ENCODE measurements at regions of chr11 and their contacts with region 1.

Region 1: DNA sequence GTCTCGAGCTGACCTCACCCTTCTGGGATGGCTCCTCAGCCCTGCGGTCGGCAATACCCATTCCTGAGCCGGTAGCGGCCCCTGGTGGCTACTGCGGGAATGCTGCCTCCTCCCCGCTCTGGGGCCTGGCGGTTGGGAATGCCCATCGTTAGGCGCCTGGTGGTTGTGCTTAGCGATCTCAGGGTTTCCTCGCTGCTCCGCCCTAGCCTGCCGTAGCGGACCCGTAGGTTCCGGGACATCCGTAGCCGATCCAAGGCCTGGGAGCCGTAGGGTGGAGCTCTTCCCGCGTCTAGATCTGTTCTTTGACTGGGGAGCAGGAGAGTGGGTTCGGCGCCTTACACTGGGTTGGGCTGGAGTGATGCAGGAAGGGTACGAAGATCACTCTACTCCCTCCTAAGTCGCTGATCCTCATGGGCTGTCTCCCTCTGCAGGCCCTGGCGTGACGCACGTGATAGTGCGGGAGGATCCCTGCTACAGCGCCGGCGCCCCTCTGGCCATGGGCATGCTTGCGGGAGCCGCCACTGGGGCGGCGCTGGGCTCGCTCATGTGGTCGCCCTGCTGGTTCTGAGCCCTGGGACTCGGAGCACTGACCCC is 14.8 kb downstream of the PLEKHB1 start:
- DNase-seq: peak; percentile 78 to 99
- ATAC-seq: peak; percentile 85 to 98
- H3K4me3 ChIP-seq: peak overlapping the region; percentile 21; the same call in 2 of the 3 replicates
- H3K27ac ChIP-seq: peak overlapping the region; percentile 42 to 62; a peak in 5 of 6 replicates
- H3K4me1 ChIP-seq: no peaks in the 10 kb centered on the region
- CTCF ChIP-seq: peak; percentile 93
- EP300 ChIP-seq: no peak
- POLR2A ChIP-seq: no peak
- RAD21 ChIP-seq: peak; percentile 98 to 99

Region 2: DNA sequence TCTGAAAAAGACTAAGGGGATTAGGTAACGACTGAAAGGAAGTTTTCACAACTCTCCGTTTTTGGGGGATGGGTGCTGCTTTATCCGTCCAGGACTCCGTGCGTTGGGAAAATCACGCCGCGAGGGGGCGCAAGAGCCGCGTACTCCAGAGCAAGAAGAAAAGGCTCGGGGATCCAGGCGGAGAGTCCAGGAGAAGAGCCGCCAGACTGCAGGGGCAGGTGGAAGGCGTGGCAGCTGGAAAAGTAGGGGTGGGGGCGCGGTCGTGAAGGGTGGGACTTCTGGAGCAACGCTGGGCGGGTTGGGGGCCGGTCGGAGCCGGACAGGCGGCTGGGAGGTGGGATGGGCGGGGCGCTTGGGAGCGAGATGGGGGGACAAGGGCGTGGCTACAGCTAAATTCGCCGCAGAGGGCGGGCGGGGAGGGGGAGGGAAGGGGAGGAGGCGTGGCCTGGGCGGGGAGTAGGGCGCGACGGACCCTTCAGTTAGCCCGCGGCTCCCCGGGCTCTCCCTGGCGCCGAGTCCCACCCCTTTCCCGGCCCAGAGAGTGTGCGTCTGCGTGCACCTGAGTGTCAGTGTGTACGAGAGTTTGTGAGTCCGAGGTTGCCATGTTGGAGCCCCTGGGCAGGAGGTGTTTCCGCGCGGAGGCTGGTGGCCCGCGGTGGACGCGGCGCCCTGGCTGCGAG is 353.7 kb before region 1 on chr11:
- CTCF ChIA-PET with region 1: interaction called, 41 read pairs
- POLR2A ChIA-PET with region 1: no interaction called
- DNase-seq: peak; percentile 98
- ATAC-seq: peak; percentile 67 to 77
- H3K4me3 ChIP-seq: peak overlapping the region; percentile 72
- H3K27ac ChIP-seq: peak overlapping the region; percentile 85 to 91
- H3K4me1 ChIP-seq: peaks cover 25% of the 10 kb centered on the region
- CTCF ChIP-seq: peak; percentile 92
- EP300 ChIP-seq: no peak
- POLR2A ChIP-seq: peak; percentile 59; the same call in 1 of the 2 replicates
- RAD21 ChIP-seq: peak; percentile 90 to 94

Region 3: GRCh38 chr11:73360336-73361013 is 300.7 kb before region 1 on chr11:
- CTCF ChIA-PET with region 1: interaction called, 11 read pairs
- POLR2A ChIA-PET with region 1: no interaction called
- DNase-seq: peak; percentile 43 to 75
- ATAC-seq: peak; percentile 72 to 86
- H3K4me3 ChIP-seq: no peak overlapping the region
- H3K27ac ChIP-seq: no peak overlapping the region
- H3K4me1 ChIP-seq: no peaks in the 10 kb centered on the region
- CTCF ChIP-seq: peak; percentile 49
- EP300 ChIP-seq: no peak
- POLR2A ChIP-seq: no peak
- RAD21 ChIP-seq: peak; percentile 42 to 63; a peak in 4 of 5 replicates

Region 4: DNA sequence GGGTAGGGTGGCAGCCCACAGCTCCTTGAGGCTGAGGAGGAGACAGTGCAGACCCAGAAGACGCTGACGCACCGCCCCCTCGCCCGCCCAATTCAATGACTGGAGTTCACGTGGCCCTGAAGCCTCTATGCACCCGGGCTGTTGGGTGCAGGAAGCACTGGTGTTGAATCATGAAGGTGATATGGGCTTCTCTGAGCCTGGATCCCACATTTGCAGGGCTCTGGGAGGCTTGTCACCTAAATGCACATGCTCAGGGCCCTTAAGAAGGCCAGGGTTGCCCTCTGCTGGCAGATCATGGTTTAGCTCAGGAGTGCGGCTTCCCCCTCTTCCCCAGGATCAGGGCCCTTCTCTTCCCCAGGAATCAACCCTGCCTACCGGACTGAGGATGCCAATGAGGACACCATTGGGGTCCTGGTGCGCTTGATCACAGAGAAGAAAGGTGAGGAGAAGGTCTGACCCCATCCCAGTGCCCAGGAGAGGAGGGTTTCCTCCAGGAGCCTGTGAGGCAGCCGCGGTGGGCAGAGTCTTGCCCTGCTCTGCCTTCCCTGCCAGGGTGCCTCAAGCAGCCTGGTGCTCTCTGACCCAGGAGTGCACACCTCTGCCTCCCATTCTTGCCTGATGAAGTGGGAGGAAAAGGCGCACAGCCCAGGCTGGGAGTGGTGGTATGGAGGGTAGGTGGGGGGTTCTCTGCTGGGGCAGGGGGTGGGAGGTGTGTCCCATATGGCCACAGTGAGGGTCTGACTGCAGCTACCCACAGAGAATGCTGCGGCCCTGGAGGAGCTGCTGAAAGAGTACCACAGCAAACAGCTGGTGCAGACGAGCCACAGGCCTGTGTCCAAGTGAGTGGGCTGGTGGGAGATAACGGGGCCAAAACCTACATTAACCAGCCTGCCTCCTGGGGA is 267.4 kb before region 1 on chr11:
- CTCF ChIA-PET with region 1: interaction called, 129 read pairs
- POLR2A ChIA-PET with region 1: no interaction called
- DNase-seq: peak; percentile 83 to 90
- ATAC-seq: peak; percentile 69 to 86
- H3K4me3 ChIP-seq: no peak overlapping the region
- H3K27ac ChIP-seq: no peak overlapping the region
- H3K4me1 ChIP-seq: peaks cover 21% of the 10 kb centered on the region
- CTCF ChIP-seq: peak; percentile 84
- EP300 ChIP-seq: no peak
- POLR2A ChIP-seq: no peak
- RAD21 ChIP-seq: peak; percentile 89 to 94

Region 5: GRCh38 chr11:73597956-73598718 is 63.0 kb before region 1 on chr11 and contains the start of gene FAM168A:
- CTCF ChIA-PET with region 1: interaction called, 19 read pairs
- POLR2A ChIA-PET with region 1: no interaction called
- DNase-seq: peak; percentile 98
- ATAC-seq: peak; percentile 97 to 98
- H3K4me3 ChIP-seq: peak within 1 kb of the TSS; percentile 86
- H3K27ac ChIP-seq: peak within 1 kb of the TSS; percentile 90 to 99
- H3K4me1 ChIP-seq: peaks cover 23% of the 10 kb centered on the region; the same call in 2 of the 3 replicates
- CTCF ChIP-seq: no peak
- EP300 ChIP-seq: no peak
- POLR2A ChIP-seq: peak; percentile 84
- RAD21 ChIP-seq: peak in 1 of 2 experiments; percentile 19; a peak in 2 of 5 replicates
- polyA plus RNA-seq, gene FAM168A: 15.3 and 21.7 TPM in 2 replicates

Region 6: GRCh38 chr11:73640592-73640991 is 20.5 kb before region 1 on chr11:
- CTCF ChIA-PET with region 1: interaction called, 81 read pairs
- POLR2A ChIA-PET with region 1: no interaction called
- DNase-seq: no peak
- ATAC-seq: no peak
- H3K4me3 ChIP-seq: no peak overlapping the region
- H3K27ac ChIP-seq: no peak overlapping the region
- H3K4me1 ChIP-seq: no peaks in the 10 kb centered on the region
- CTCF ChIP-seq: no peak
- EP300 ChIP-seq: no peak
- POLR2A ChIP-seq: no peak
- RAD21 ChIP-seq: no peak

Region 7: GRCh38 chr11:73680687-73681086 is 19.6 kb after region 1 on chr11:
- CTCF ChIA-PET with region 1: interaction called, 15 read pairs
- POLR2A ChIA-PET with region 1: interaction called, 3 read pairs
- DNase-seq: no peak
- ATAC-seq: no peak; a peak in 1 of 6 replicates
- H3K4me3 ChIP-seq: no peak overlapping the region
- H3K27ac ChIP-seq: no peak overlapping the region
- H3K4me1 ChIP-seq: no peaks in the 10 kb centered on the region
- CTCF ChIP-seq: no peak
- EP300 ChIP-seq: no peak
- POLR2A ChIP-seq: no peak
- RAD21 ChIP-seq: no peak

Region 8: DNA sequence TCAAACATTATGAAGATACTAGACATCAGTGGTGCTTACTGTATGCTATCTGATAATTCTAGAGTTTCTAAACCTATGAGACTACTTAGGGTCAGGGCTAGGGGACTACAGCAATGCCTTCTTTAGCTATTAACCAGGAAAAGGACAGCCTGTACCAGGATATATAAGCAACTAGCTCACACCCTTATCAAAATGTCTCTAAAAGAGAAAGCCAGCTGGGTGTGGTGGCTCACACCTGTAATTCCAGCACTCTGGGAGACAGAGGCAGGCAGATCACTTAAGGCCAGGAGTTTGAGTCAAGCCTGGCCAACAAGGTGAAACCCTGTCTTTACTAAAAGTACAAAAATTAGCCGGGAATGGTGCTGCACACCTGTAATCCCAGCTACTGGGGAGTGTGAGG is 43.9 kb after region 1 on chr11:
- CTCF ChIA-PET with region 1: no interaction called
- POLR2A ChIA-PET with region 1: no interaction called
- DNase-seq: no peak
- ATAC-seq: no peak
- H3K4me3 ChIP-seq: no peak overlapping the region
- H3K27ac ChIP-seq: no peak overlapping the region
- H3K4me1 ChIP-seq: no peaks in the 10 kb centered on the region
- CTCF ChIP-seq: no peak
- EP300 ChIP-seq: no peak
- POLR2A ChIP-seq: no peak
- RAD21 ChIP-seq: no peak

Region 9: DNA sequence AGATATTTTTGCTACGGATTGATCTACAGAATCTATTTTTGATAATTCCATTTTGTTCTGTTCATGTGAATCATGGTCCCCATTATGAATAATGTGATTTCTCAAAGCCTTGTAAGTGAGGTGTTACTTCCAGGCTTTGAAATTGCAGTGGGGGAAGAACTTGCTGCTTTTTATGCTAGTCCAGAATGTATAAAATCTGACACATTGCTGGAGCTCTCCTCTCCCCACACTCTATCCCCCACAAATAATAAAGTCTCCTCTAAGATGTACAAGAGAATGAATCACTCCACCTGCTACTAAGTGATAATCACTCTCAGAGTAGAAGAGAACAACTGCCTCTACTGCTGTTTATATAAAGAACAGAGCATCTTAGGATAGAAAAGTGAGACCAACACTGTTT is 105.6 kb after region 1 on chr11:
- CTCF ChIA-PET with region 1: no interaction called
- POLR2A ChIA-PET with region 1: no interaction called
- DNase-seq: no peak
- ATAC-seq: no peak
- H3K4me3 ChIP-seq: no peak overlapping the region
- H3K27ac ChIP-seq: no peak overlapping the region
- H3K4me1 ChIP-seq: peaks cover 6% of the 10 kb centered on the region; the same call in 1 of the 3 replicates
- CTCF ChIP-seq: no peak
- EP300 ChIP-seq: no peak
- POLR2A ChIP-seq: no peak
- RAD21 ChIP-seq: no peak

Region 10: GRCh38 chr11:73779084-73779902 is 118.2 kb after region 1 on chr11:
- CTCF ChIA-PET with region 1: no interaction called
- POLR2A ChIA-PET with region 1: no interaction called
- DNase-seq: peak; percentile 97 to 99
- ATAC-seq: peak; percentile 99
- H3K4me3 ChIP-seq: peak overlapping the region; percentile 40
- H3K27ac ChIP-seq: peak overlapping the region; percentile 80 to 91
- H3K4me1 ChIP-seq: peaks cover 15% of the 10 kb centered on the region; the same call in 2 of the 3 replicates
- CTCF ChIP-seq: no peak
- EP300 ChIP-seq: no peak
- POLR2A ChIP-seq: peak; percentile 48
- RAD21 ChIP-seq: no peak

Region 11: GRCh38 chr11:73795925-73796632 is 134.9 kb after region 1 on chr11:
- CTCF ChIA-PET with region 1: no interaction called
- POLR2A ChIA-PET with region 1: no interaction called
- DNase-seq: peak in 1 of 2 experiments; percentile 28
- ATAC-seq: peak; percentile 39 to 91; a peak in 3 of 6 replicates
- H3K4me3 ChIP-seq: no peak overlapping the region
- H3K27ac ChIP-seq: no peak overlapping the region
- H3K4me1 ChIP-seq: no peaks in the 10 kb centered on the region
- CTCF ChIP-seq: no peak
- EP300 ChIP-seq: no peak
- POLR2A ChIP-seq: no peak
- RAD21 ChIP-seq: no peak